GM18951 (cell line): ENCODE measurements at regions of chr10 and their contacts with region 1.

Region 1: DNA sequence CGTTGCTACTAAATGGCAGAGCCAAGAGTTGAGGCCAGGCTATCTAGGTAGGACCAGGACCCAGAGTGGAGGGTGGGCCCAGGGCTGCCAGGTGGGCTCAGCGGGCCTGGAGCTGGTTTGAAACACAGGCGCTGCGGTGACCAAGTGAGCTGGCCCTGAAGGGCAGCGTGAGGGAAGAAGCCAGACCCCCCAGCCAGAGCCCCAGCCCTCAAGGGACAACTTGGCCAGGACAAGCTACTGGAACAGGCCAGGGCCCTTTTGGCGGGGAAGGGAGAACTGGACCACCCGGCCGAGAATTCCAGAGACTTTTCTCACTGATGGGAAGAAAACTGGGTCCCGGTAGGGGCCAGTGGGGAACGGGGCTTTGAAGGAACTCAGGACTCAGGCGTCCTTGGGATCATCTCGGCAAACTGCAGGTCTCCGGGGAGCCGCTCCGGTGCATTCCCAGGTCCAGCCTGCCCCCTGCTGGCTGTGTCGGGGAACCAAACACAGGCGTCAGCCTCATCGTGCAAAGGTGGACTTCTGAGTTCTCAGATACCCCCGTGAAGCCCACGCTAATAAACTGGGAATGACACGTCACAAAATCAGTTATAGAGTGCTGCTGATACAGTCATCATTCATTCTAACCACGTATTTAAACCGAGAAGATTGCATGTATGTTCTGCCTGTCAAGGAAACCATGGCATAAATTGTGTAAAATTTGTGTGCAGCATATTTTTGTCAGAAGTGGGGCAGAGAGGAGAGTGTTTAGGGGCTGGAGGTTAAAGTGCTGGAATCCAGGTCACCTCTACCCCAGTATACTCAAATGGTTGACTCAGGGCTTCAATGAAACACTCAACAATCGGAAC is 76.0 kb upstream of the CPXM2 start:
- POLR2A ChIP-seq: no peak

Region 2: DNA sequence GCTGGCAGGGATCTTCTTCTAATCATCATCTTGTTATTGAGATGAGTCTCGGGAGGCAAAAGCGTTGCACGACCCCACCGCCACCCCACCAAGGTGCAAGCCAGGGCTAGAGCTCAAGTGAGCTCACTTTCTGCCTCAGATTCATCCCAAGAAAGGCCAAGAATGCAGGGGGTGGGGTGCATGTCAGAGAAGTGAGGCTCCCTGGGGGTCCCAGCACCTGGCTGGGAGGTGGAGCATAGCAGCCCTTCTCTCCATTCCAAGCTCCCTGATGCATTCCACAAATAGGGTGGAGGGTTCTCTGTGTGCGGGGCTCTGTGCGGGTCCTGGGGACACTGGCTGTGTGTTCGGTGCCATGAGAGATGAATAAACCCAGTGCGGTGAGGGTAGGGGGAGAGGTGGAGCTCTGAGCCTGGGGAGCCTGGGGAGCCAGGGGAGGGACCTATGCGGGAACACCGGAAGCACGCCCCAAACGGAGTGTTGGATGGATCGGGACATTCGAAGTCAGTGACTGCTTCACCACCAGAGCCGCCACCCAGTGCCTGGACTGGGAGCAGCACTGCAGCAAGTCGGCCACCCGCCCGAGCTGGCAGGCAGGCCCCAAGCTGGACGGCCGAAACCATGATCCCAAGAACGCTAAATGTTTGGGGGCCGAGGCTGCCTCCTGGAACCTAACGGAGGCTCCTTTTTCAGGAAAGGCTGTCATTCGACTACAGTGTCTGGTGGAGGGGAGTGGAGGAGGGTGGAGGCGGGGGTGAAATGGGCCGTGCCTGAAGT is 849.8 kb before region 1 on chr10:
- in situ Hi-C with region 1: loop called (anchors 25 kb)
- POLR2A ChIP-seq: no peak

Region 3: GRCh38 chr10:124025660-124026588 is 58.3 kb after region 1 on chr10:
- in situ Hi-C with region 1: no loop called
- POLR2A ChIP-seq: no peak

Region 4: GRCh38 chr10:124053971-124054370 is 86.4 kb after region 1 on chr10:
- in situ Hi-C with region 1: no loop called
- POLR2A ChIP-seq: no peak

Region 5: GRCh38 chr10:124231168-124232155 is 263.8 kb after region 1 on chr10:
- in situ Hi-C with region 1: no loop called
- POLR2A ChIP-seq: no peak